HepG2 (cell line): ENCODE measurements at regions of chr21 and their contacts with region 1.

Region 1: GRCh38 chr21:36478207-36478701 is 1.7 kb downstream of the CLDN14 start:
- DNase-seq: no peak
- ATAC-seq: no peak
- H3K4me3 ChIP-seq: peak overlapping the region; percentile 50 to 79 (median 54)
- H3K27ac ChIP-seq: peak overlapping the region; percentile 89
- H3K4me1 ChIP-seq: peaks cover 72% of the 10 kb centered on the region
- H3K27me3 ChIP-seq: no peaks in the 10 kb centered on the region; a peak in 1 of 5 replicates
- CTCF ChIP-seq: no peak
- EP300 ChIP-seq: no peak
- POLR2A ChIP-seq: peak in 1 of 2 experiments; percentile 19; a peak in 1 of 4 replicates
- RAD21 ChIP-seq: no peak

Region 2: GRCh38 chr21:36419996-36420395 is 58.3 kb before region 1 on chr21:
- CTCF ChIA-PET with region 1: interaction called, 4 read pairs
- POLR2A ChIA-PET with region 1: no interaction called
- in situ Hi-C with region 1: no loop called
- intact Hi-C with region 1: loop called (anchors 2 kb)
- DNase-seq: peak; percentile 63
- ATAC-seq: peak; percentile 79
- H3K4me3 ChIP-seq: no peak overlapping the region
- H3K27ac ChIP-seq: no peak overlapping the region
- H3K4me1 ChIP-seq: 0 out of 2 replicates have a peak, but pooled peaks cover 9% of the 10 kb centered on the region
- H3K27me3 ChIP-seq: no peaks in the 10 kb centered on the region
- CTCF ChIP-seq: peak; percentile 93
- EP300 ChIP-seq: no peak
- POLR2A ChIP-seq: no peak
- RAD21 ChIP-seq: peak; percentile 55

Region 3: DNA sequence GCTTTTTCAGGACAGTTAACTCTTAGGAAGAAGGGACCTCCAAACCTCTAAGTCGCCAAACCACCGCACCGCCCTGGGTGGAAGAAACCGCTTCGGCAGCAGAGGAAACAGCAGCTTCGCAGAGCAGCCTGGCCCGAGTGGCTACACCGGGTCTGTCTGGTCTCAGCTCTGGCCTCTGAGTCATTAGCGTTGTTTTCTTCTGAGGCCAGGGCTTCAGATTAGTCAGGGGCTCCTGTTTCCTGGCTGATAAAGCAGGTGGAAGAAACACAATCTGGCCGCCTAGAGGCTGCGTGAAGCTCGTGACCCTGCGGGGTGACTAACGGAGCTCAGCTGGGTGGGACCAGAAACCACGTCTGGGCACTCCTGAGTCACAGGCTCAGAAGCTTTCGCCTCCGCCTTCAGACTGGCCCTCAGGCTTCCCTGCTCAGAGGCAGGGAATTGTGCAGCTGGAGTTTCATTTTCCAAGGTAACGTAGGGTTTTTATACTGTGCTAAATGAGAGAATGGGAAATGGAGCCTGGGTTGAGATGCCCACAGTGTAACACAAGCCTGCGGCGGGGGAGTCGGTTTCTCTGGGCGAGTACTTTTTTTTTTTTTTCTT is 48.2 kb before region 1 on chr21:
- CTCF ChIA-PET with region 1: no interaction called
- POLR2A ChIA-PET with region 1: interaction called, 15 read pairs
- in situ Hi-C with region 1: no loop called
- intact Hi-C with region 1: no loop called
- DNase-seq: peak; percentile 69
- ATAC-seq: peak; percentile 90
- H3K4me3 ChIP-seq: peak overlapping the region in 2 of 3 experiments; percentile 21 to 58; a peak in 4 of 6 replicates
- H3K27ac ChIP-seq: peak overlapping the region; percentile 22
- H3K4me1 ChIP-seq: peaks cover 31% of the 10 kb centered on the region
- H3K27me3 ChIP-seq: no peaks in the 10 kb centered on the region
- CTCF ChIP-seq: no peak
- EP300 ChIP-seq: no peak
- POLR2A ChIP-seq: no peak
- RAD21 ChIP-seq: no peak

Region 4: GRCh38 chr21:36454093-36454531 is 24.1 kb before region 1 on chr21:
- CTCF ChIA-PET with region 1: no interaction called
- POLR2A ChIA-PET with region 1: interaction called, 12 read pairs
- in situ Hi-C with region 1: no loop called
- intact Hi-C with region 1: no loop called
- DNase-seq: no peak
- ATAC-seq: peak; percentile 87
- H3K4me3 ChIP-seq: peak overlapping the region in 1 of 3 experiments; percentile 17; a peak in 1 of 6 replicates
- H3K27ac ChIP-seq: no peak overlapping the region
- H3K4me1 ChIP-seq: peaks cover 14% of the 10 kb centered on the region
- H3K27me3 ChIP-seq: peaks cover 0 to 5% of the 10 kb centered on the region in 2 experiments; a peak in 2 of 5 replicates
- CTCF ChIP-seq: no peak
- EP300 ChIP-seq: no peak
- POLR2A ChIP-seq: no peak
- RAD21 ChIP-seq: no peak

Region 5: GRCh38 chr21:36615274-36615964 is 137.2 kb after region 1 on chr21:
- CTCF ChIA-PET with region 1: no interaction called
- POLR2A ChIA-PET with region 1: no interaction called
- in situ Hi-C with region 1: no loop called
- intact Hi-C with region 1: no loop called
- DNase-seq: peak; percentile 40
- ATAC-seq: peak; percentile 98
- H3K4me3 ChIP-seq: no peak overlapping the region
- H3K27ac ChIP-seq: no peak overlapping the region
- H3K4me1 ChIP-seq: peaks cover 15% of the 10 kb centered on the region
- H3K27me3 ChIP-seq: peaks cover 0 to 20% of the 10 kb centered on the region in 2 experiments; a peak in 1 of 5 replicates
- CTCF ChIP-seq: peak; percentile 47
- EP300 ChIP-seq: no peak
- POLR2A ChIP-seq: no peak
- RAD21 ChIP-seq: peak; percentile 26; the same call in 1 of the 2 replicates